WTC11 (cell line): ENCODE measurements at regions of chr19 and their contacts with region 1.

Region 1: GRCh38 chr19:2151339-2152229 is at the start of gene AP3D1:
- DNase-seq: peak; percentile 100
- ATAC-seq: peak; percentile 93
- H3K4me3 Mint-ChIP-seq: peak within 1 kb of the TSS; percentile 85
- H3K27ac Mint-ChIP-seq: peak within 1 kb of the TSS; percentile 97
- H3K4me1 Mint-ChIP-seq: peaks cover 28% of the 10 kb centered on the region
- H3K27me3 Mint-ChIP-seq: no peaks in the 10 kb centered on the region
- CTCF ChIP-seq: no peak
- total RNA-seq, gene AP3D1: 160 to 190 TPM (median 163 TPM) in 3 replicates

Region 2: GRCh38 chr19:2129892-2130770 is 21.5 kb before region 1 on chr19:
- CTCF ChIA-PET with region 1: no interaction called
- POLR2A ChIA-PET with region 1: no interaction called
- DNase-seq: no peak
- ATAC-seq: no peak
- H3K4me3 Mint-ChIP-seq: no peak overlapping the region
- H3K27ac Mint-ChIP-seq: no peak overlapping the region
- H3K4me1 Mint-ChIP-seq: no peaks in the 10 kb centered on the region
- H3K27me3 Mint-ChIP-seq: no peaks in the 10 kb centered on the region
- CTCF ChIP-seq: no peak

Region 3: DNA sequence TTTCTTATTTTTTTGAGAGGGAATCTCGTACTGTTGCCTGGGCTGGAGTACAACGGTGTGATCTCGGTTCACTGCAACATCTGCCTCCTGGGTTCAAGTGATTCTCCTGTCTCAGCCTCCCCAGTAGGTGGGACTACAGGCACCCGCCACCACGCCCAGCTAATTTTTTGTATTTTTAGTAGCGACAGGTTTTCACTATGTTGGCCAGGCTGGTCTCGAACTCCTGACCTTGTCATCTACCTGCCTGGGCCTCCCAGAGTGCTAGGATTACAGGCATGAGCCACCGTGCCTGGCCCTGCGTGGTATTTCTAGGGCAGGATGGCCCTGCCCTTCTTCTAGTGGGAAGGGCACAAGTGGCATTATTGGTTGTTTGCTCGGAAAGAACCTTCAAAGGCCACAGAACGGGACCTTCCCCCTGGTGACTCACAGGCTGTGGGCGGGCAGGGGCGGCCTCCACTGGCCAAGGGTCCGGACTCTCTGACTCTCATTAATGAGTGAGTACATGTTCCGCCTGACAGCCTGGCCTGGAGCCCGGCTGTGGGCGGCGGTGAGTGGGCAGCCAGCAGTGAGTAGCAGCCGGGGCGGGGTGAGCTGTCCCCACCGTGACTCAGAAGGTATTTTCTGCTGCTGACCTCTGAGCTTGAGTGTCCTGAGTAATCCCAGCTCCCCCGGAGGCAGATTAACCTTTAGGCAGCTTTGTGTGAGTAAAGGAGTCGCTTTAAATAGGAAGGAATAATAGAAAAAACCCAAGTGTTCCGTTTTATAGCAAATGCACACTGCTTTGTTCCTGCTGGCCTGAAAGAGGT is 17.2 kb after region 1 on chr19:
- CTCF ChIA-PET with region 1: interaction called, 17 read pairs
- POLR2A ChIA-PET with region 1: interaction called, 3 read pairs
- DNase-seq: no peak
- ATAC-seq: no peak
- H3K4me3 Mint-ChIP-seq: no peak overlapping the region
- H3K27ac Mint-ChIP-seq: peak overlapping the region; percentile 91; the same call in 1 of the 2 replicates
- H3K4me1 Mint-ChIP-seq: peaks cover 46% of the 10 kb centered on the region
- H3K27me3 Mint-ChIP-seq: no peaks in the 10 kb centered on the region
- CTCF ChIP-seq: no peak

Region 4: DNA sequence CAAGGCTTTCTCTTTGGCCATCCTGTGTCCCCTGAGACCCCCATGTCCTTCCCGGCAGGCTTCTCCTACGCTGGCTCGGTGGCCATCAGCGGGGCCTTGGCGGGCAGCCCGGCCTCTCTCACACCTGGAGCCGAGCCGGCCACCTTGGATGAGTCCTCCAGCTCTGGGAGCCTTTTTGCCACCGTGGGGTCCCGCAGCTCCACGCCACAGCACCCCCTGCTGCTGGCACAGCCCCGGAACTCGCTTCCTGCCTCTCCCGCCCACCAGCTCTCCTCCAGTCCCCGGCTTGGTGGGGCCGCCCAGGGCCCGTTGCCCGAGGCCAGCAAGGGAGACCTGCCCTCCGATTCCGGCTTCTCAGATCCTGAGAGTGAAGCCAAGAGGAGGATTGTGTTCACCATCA is 70.3 kb after region 1 on chr19:
- CTCF ChIA-PET with region 1: interaction called, 18 read pairs
- POLR2A ChIA-PET with region 1: no interaction called
- DNase-seq: no peak
- ATAC-seq: no peak
- H3K4me3 Mint-ChIP-seq: no peak overlapping the region
- H3K27ac Mint-ChIP-seq: no peak overlapping the region
- H3K4me1 Mint-ChIP-seq: no peaks in the 10 kb centered on the region
- H3K27me3 Mint-ChIP-seq: no peaks in the 10 kb centered on the region
- CTCF ChIP-seq: no peak

Region 5: DNA sequence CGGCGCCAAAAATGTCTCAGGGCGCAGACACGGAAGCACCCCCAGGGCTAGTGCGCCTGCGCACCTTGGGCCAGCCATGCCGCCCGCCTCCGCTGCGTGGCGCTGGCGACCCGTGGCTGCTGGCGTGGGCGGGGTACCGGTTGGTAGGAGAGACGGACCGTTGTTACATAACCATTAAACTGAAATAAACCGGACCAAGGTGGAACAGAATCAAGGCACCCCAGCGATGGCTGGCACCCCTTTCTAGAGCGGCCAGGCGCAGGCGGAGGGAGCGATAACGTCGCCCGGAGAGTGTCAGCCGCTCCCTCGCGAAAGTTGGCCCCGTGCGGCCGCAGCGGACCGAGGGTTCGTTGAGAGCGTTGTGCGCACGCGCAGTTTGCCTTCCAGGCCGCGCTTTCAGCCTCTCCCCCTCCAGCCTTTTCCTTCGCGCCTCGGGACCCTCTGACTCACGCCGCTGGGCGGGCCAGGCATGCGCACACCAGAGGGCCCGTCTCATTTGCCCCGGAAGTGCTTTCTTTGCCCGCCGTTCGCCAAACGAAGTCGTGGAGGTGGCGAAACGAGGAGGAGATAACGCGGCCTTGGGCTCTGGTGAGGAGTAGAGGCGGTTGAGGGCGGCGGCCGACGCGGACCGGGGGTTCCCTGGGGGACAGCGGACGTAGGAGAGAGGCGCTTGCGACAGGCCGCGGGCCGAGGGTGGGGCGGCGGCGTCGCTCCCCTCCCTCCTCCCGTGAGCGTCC is 84.9 kb after region 1 on chr19 and contains the starts of genes PLEKHJ1 and SF3A2:
- CTCF ChIA-PET with region 1: interaction called, 21 read pairs
- POLR2A ChIA-PET with region 1: no interaction called
- DNase-seq: peak; percentile 97
- ATAC-seq: peak; percentile 83
- H3K4me3 Mint-ChIP-seq: peak within 1 kb of the TSS; percentile 93
- H3K27ac Mint-ChIP-seq: peak within 1 kb of the TSS; percentile 99
- H3K4me1 Mint-ChIP-seq: peaks cover 42% of the 10 kb centered on the region
- H3K27me3 Mint-ChIP-seq: peaks cover 5% of the 10 kb centered on the region; the same call in 1 of the 2 replicates
- CTCF ChIP-seq: peak; percentile 83
- total RNA-seq, gene PLEKHJ1: 164 to 189 TPM (median 167 TPM) in 3 replicates
- total RNA-seq, gene SF3A2: 167 to 184 TPM (median 169 TPM) in 3 replicates